H1 (cell line): ENCODE measurements at regions of chr2 and their contacts with region 1.

Region 1: GRCh38 chr2:84314901-84315330 is 144.2 kb downstream of the SUCLG1 start:
- DNase-seq: peak; percentile 86 to 96
- H3K4me3 ChIP-seq: no peak overlapping the region
- H3K27ac ChIP-seq: no peak overlapping the region
- H3K4me1 ChIP-seq: peaks cover 0 to 8% (median 6%) of the 10 kb centered on the region in 4 experiments; a peak in 5 of 7 replicates
- H3K27me3 ChIP-seq: no peaks in the 10 kb centered on the region
- CTCF ChIP-seq: peak; percentile 85 to 98 (median 95)
- EP300 ChIP-seq: no peak
- POLR2A ChIP-seq: no peak
- RAD21 ChIP-seq: peak; percentile 99 to 100

Region 2: DNA sequence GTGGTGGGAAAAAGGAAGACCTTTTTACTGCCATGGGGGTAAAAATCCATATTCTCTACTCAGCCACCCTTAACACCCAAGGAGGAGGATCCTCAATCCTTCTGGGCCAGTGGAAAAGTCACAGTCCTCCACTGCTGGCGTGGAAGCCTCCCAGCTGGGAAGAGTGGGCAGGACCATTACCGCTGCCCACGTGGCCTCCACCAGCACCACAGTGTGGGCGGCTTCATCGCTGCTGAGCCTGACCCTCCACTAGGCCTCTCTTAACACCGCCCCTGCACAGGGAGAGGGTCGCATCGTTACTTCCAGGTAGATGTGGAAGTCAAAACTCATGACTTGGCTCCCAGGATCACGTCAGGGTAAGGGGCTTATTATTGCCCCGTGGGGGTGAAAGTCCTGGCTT is 512.3 kb before region 1 on chr2:
- CTCF ChIA-PET with region 1: no interaction called
- POLR2A ChIA-PET with region 1: no interaction called
- DNase-seq: no peak
- H3K4me3 ChIP-seq: no peak overlapping the region
- H3K27ac ChIP-seq: no peak overlapping the region
- H3K4me1 ChIP-seq: no peaks in the 10 kb centered on the region
- H3K27me3 ChIP-seq: no peaks in the 10 kb centered on the region
- CTCF ChIP-seq: no peak
- EP300 ChIP-seq: no peak
- POLR2A ChIP-seq: no peak
- RAD21 ChIP-seq: no peak

Region 3: DNA sequence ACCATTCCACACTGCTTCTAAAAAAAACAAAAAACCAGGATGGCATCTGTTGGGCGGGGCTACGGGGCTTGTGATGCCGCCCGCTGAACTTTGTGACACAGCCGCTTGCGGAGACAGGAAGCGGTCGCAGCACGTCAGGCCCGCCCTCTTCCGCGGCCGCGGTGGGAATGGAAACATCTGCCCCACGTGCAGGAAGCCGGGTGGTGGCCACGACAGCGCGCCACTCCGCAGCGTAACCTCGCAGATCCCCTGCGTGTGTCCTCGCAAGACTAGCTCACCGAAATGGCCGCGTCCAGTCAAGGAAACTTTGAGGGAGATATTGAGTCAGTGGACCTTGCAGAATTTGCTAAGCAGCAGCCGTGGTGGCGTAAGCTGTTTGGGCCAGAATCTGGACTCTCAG is 24.4 kb before region 1 on chr2:
- CTCF ChIA-PET with region 1: no interaction called
- POLR2A ChIA-PET with region 1: no interaction called
- DNase-seq: no peak
- H3K4me3 ChIP-seq: no peak overlapping the region
- H3K27ac ChIP-seq: no peak overlapping the region
- H3K4me1 ChIP-seq: no peaks in the 10 kb centered on the region
- H3K27me3 ChIP-seq: no peaks in the 10 kb centered on the region
- CTCF ChIP-seq: no peak
- EP300 ChIP-seq: no peak
- POLR2A ChIP-seq: no peak
- RAD21 ChIP-seq: no peak

Region 4: GRCh38 chr2:84395820-84396219 is 80.9 kb after region 1 on chr2:
- CTCF ChIA-PET with region 1: no interaction called
- POLR2A ChIA-PET with region 1: no interaction called
- DNase-seq: no peak
- H3K4me3 ChIP-seq: no peak overlapping the region
- H3K27ac ChIP-seq: no peak overlapping the region
- H3K4me1 ChIP-seq: no peaks in the 10 kb centered on the region
- H3K27me3 ChIP-seq: no peaks in the 10 kb centered on the region
- CTCF ChIP-seq: no peak
- EP300 ChIP-seq: no peak
- POLR2A ChIP-seq: no peak
- RAD21 ChIP-seq: no peak

Region 5: DNA sequence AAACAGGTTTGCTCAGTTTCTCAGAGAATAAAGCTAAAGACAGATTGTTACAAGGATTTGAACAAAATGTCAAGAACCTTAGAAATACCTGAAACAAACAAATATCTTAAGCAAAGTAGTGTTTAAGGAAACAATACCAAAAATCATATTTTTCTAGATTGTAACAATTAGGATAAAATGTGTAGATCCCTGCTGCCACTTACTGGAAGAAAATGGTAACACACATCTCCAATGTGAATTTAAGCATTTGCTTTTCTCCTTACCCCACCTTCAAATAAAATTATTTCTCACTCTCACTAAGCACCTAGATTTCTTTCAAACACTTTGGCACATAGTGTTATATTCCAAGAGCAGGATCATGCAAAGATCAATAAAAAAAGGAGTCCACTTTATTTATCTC is 109.2 kb after region 1 on chr2:
- CTCF ChIA-PET with region 1: interaction called, 16 read pairs
- POLR2A ChIA-PET with region 1: no interaction called
- DNase-seq: no peak
- H3K4me3 ChIP-seq: no peak overlapping the region
- H3K27ac ChIP-seq: no peak overlapping the region
- H3K4me1 ChIP-seq: no peaks in the 10 kb centered on the region
- H3K27me3 ChIP-seq: no peaks in the 10 kb centered on the region
- CTCF ChIP-seq: peak in 1 of 3 experiments; percentile 56; a peak in 2 of 4 replicates
- EP300 ChIP-seq: no peak
- POLR2A ChIP-seq: no peak
- RAD21 ChIP-seq: peak; percentile 50 to 61